ENCODE measurements at regions of chr7 and their contacts with region 1.

Region 1: DNA sequence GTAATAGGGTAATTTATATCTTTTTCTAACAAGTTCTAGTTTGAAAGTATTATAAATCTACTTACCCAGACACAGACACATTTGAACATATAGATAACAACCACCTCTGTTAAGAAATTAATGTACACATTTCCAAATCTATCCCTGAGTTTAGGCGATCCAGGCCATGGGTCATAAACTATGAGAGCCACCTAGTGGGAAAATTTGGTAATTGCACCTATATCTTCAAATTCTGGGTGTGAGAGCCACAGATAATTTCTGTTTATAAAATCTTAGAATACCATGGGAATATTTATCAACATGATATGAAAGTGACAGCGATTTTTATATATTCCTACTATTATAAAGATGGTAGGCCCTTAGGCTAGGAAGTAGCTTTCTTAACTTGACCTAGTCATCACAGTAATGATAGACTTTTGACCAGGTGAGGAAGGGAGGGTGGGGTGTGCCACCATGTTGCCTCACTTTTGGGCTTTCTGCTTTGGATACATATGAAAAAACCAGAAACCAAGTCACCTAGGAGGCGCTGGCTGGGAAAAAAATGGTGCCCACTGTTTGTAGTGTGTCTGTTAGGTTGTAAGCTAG is 8.0 kb upstream of the EPHA1 start:
- DNase-seq: no peak
- H3K4me3 Mint-ChIP-seq: no peak overlapping the region
- H3K27ac Mint-ChIP-seq: no peak overlapping the region
- H3K4me1 Mint-ChIP-seq: peaks cover 4% of the 10 kb centered on the region
- H3K27me3 Mint-ChIP-seq: peaks cover 20% of the 10 kb centered on the region

Region 2: GRCh38 chr7:143305423-143306070 is 111.1 kb before region 1 on chr7:
- intact Hi-C with region 1: loop called (anchors 5 kb)
- DNase-seq: peak; percentile 30
- H3K4me3 Mint-ChIP-seq: no peak overlapping the region
- H3K27ac Mint-ChIP-seq: peak overlapping the region; percentile 25
- H3K4me1 Mint-ChIP-seq: peaks cover 69% of the 10 kb centered on the region
- H3K27me3 Mint-ChIP-seq: no peaks in the 10 kb centered on the region

Region 3: GRCh38 chr7:143362131-143363015 is 54.3 kb before region 1 on chr7 and contains the start of gene FAM131B:
- intact Hi-C with region 1: loop called (anchors 1 kb)
- DNase-seq: no peak
- H3K4me3 Mint-ChIP-seq: peak within 1 kb of the TSS; percentile 83
- H3K27ac Mint-ChIP-seq: no peak within 1 kb of the TSS
- H3K4me1 Mint-ChIP-seq: no peaks in the 10 kb centered on the region
- H3K27me3 Mint-ChIP-seq: peaks cover 76% of the 10 kb centered on the region
- total RNA-seq, gene FAM131B: 0.44 and 0.54 TPM in 2 replicates

Region 4: DNA sequence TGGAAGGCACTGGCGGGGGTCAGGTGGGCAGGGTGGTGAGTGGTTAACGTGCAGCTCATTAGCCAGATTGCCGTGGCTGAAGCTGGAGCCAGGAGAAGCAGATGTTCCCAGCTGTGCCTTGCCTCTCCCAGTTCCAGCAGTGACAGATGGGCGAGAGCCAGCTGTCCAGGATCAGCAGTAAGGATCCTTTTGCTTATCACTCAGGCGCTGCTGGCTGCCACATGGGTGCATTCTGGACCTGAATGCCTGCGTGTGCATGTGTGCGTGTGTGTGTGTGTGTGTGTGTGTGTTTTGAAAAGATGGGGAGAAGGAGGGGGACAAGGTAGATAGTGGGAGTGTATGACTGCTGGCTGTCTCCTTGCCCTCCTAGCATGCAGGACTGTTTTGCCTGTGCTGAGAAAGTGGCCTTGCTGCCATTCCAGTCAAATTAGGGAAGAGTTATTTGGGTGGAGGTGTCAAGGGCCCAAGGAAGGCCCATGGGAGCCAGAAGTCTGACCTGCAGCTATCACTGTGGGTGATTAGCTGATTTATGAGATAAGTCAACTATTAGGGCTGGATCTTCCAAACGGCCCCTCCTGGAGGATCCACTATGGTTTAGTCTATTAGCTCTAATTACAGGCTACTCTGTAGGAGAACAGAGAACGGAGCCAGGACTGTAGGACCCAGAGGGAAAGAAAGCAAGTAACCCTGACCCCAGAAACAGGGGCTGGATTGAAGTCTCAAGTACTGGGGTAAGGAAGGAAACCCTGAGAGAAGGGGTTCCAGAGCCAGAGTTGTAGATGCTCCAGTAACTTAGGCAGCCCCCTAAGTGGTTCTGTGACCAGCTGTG is 11.3 kb before region 1 on chr7:
- intact Hi-C with region 1: no loop called
- DNase-seq: no peak
- H3K4me3 Mint-ChIP-seq: no peak overlapping the region
- H3K27ac Mint-ChIP-seq: no peak overlapping the region
- H3K4me1 Mint-ChIP-seq: peaks cover 22% of the 10 kb centered on the region
- H3K27me3 Mint-ChIP-seq: peaks cover 51% of the 10 kb centered on the region

Region 5: GRCh38 chr7:144127703-144128334 is 711.2 kb after region 1 on chr7:
- intact Hi-C with region 1: loop called (anchors 1 kb)
- DNase-seq: peak; percentile 72
- H3K4me3 Mint-ChIP-seq: no peak overlapping the region
- H3K27ac Mint-ChIP-seq: no peak overlapping the region
- H3K4me1 Mint-ChIP-seq: no peaks in the 10 kb centered on the region
- H3K27me3 Mint-ChIP-seq: no peaks in the 10 kb centered on the region

Measured in activated T-helper 1 cell treated with anti-CD3 and anti-CD28 coated beads, Interleukin-12 subunit alpha, Interleukin-12 subunit beta, Interleukin-2, Interleukin-4 antibody, amounts not matched to agents 30 ng/mL and 10 ng/mL and 1 ng/mL, durations not matched to agents 14 hours and 24 hours and 36 hours (primary cell).